HepG2 (cell line): ENCODE measurements at regions of chr11 and their contacts with region 1.

Region 1: GRCh38 chr11:10770626-10771254 is 19.7 kb downstream of the CTR9 start:
- DNase-seq: peak; percentile 33
- ATAC-seq: peak; percentile 77
- H3K4me3 ChIP-seq: no peak overlapping the region
- H3K27ac ChIP-seq: no peak overlapping the region
- H3K4me1 ChIP-seq: no peaks in the 10 kb centered on the region
- H3K27me3 ChIP-seq: no peaks in the 10 kb centered on the region
- CTCF ChIP-seq: peak; percentile 72
- EP300 ChIP-seq: no peak
- POLR2A ChIP-seq: no peak
- RAD21 ChIP-seq: no peak

Region 2: GRCh38 chr11:10750838-10751580 is 19.7 kb before region 1 on chr11 and contains the start of gene CTR9:
- CTCF ChIA-PET with region 1: no interaction called
- POLR2A ChIA-PET with region 1: interaction called, 3 read pairs
- in situ Hi-C with region 1: no loop called
- intact Hi-C with region 1: loop called (anchors 2 kb)
- DNase-seq: peak; percentile 87
- ATAC-seq: peak; percentile 97
- H3K4me3 ChIP-seq: peak within 1 kb of the TSS; percentile 75 to 91 (median 87)
- H3K27ac ChIP-seq: peak within 1 kb of the TSS; percentile 86
- H3K4me1 ChIP-seq: peaks cover 10% of the 10 kb centered on the region
- H3K27me3 ChIP-seq: no peaks in the 10 kb centered on the region; a peak in 2 of 5 replicates
- CTCF ChIP-seq: peak; percentile 84
- EP300 ChIP-seq: no peak
- POLR2A ChIP-seq: peak; percentile 91 to 93
- RAD21 ChIP-seq: peak; percentile 61
- total RNA-seq, gene CTR9: 22.1 and 35.9 TPM in 2 replicates

Region 3: DNA sequence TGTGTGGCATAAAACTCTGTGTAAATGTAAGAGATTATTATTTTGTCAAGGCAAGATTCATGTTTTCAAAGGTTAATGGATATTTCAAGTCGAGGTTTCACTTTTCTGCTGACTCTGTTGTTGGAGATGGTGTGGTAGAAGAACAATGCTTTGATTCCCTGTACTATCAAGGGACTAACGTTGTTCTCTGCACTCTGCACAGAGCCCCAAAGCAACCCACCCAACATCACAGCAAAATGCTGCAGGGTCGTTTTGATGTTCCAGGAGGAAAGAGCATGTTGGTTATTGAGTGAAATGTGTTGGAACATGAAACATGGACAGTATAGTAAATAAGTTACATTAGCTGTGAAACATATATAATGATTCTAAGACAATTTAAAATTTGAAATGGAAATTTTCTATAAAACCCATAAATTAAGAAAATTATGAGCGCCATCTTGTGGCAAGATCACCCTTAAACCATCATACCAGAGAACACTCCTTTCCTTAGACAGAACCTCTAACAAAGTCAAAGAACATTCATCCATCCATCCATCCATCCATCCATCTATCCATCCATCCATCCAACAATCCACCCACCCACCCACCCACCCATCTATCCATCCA is 251.5 kb after region 1 on chr11:
- CTCF ChIA-PET with region 1: no interaction called
- POLR2A ChIA-PET with region 1: no interaction called
- in situ Hi-C with region 1: no loop called
- intact Hi-C with region 1: loop called (anchors 5 kb)
- DNase-seq: no peak
- ATAC-seq: no peak
- H3K4me3 ChIP-seq: no peak overlapping the region
- H3K27ac ChIP-seq: no peak overlapping the region
- H3K4me1 ChIP-seq: no peaks in the 10 kb centered on the region
- H3K27me3 ChIP-seq: 0 out of 5 replicates have a peak, but pooled peaks cover 0 to 3% of the 10 kb centered on the region in 2 experiments
- CTCF ChIP-seq: 0 out of 2 replicates have a peak, but pooled peaks have one; percentile 27
- EP300 ChIP-seq: no peak
- POLR2A ChIP-seq: no peak
- RAD21 ChIP-seq: no peak

Region 4: GRCh38 chr11:11567936-11568650 is 797.4 kb after region 1 on chr11:
- CTCF ChIA-PET with region 1: no interaction called
- POLR2A ChIA-PET with region 1: no interaction called
- in situ Hi-C with region 1: no loop called
- intact Hi-C with region 1: no loop called
- DNase-seq: no peak
- ATAC-seq: no peak
- H3K4me3 ChIP-seq: no peak overlapping the region
- H3K27ac ChIP-seq: no peak overlapping the region
- H3K4me1 ChIP-seq: no peaks in the 10 kb centered on the region
- H3K27me3 ChIP-seq: peaks cover 0 to 4% of the 10 kb centered on the region in 2 experiments; a peak in 1 of 5 replicates
- CTCF ChIP-seq: no peak
- EP300 ChIP-seq: no peak
- POLR2A ChIP-seq: no peak
- RAD21 ChIP-seq: no peak